ENCODE measurements at regions of chr1 and their contacts with region 1.

Region 1: DNA sequence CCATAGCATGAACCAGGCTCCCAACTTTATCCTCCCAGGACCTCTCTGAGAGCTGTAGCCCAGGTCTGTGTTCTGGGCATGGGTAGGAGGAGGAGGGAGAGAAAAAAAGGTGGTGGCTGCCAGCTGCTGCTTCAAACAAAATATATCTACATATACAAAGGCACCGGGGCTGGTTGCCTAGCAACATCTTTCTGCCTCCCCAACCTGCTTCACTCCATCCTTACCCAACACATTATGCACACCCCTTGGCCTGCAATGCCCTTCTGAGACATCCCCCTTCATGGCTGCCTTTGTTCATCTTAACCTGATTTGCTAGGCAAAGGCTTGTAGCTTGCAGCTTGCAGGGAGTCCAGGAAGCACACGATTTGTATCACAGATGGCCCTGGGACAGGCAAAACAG is 27.2 kb upstream of the ATP1A1 start:
- DNase-seq: no peak
- ATAC-seq: peak in 2 of 4 donors; percentile 27 to 57
- H3K4me3 ChIP-seq: no peak overlapping the region
- H3K27ac ChIP-seq: no peak overlapping the region
- H3K4me1 ChIP-seq: peaks cover 0 to 6% (median 0%) of the 10 kb centered on the region in 12 donors
- H3K27me3 ChIP-seq: no peaks in the 10 kb centered on the region
- CTCF ChIP-seq: no peak
- POLR2A ChIP-seq: no peak

Region 2: GRCh38 chr1:116151739-116152576 is 193.9 kb before region 1 on chr1:
- intact Hi-C with region 1: loop called in 1 of 10 experiments (anchors 10 kb)
- DNase-seq: peak; percentile 77 to 86 (median 79)
- ATAC-seq: peak; percentile 60 to 98 (median 94)
- H3K4me3 ChIP-seq: peak overlapping the region in 10 of 12 donors; percentile 38 to 65 (median 54)
- H3K27ac ChIP-seq: peak overlapping the region; percentile 3 to 87 (median 70)
- H3K4me1 ChIP-seq: peaks cover 0 to 27% (median 12%) of the 10 kb centered on the region in 12 donors
- H3K27me3 ChIP-seq: no peaks in the 10 kb centered on the region
- CTCF ChIP-seq: peak; percentile 85 to 98 (median 96)
- POLR2A ChIP-seq: peak in 1 of 2 donors; percentile 24

Region 3: GRCh38 chr1:116226017-116226416 is 119.8 kb before region 1 on chr1:
- intact Hi-C with region 1: loop called in 1 of 10 experiments (anchors 10 kb)
- DNase-seq: no peak
- ATAC-seq: no peak
- H3K4me3 ChIP-seq: no peak overlapping the region
- H3K27ac ChIP-seq: no peak overlapping the region
- H3K4me1 ChIP-seq: no peaks in the 10 kb centered on the region
- H3K27me3 ChIP-seq: no peaks in the 10 kb centered on the region
- CTCF ChIP-seq: no peak
- POLR2A ChIP-seq: no peak

Measured in heart left ventricle (tissue), 16 donors.